ENCODE measurements at regions of chr13 and their contacts with region 1.

Region 1: DNA sequence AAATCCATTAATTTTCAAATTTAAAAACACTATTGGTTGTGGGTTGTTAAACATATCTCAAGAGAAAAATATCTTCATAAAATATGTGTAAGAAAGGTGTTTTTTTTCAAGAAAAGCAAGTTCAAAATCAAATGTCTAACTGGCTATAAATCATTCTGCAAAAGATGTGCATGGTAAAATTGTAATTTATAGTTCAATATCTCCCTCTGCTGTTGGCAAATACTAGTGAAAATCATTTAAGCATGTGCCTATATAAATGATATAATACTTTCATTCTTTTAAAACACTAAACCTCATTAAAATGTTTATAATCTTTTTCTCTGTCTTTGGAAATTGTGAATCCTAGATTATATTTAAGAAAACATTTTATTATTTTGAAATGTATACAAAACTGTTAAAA is 17.2 kb upstream of the SLITRK6 start:
- DNase-seq: no peak
- ATAC-seq: no peak
- H3K4me3 ChIP-seq: no peak overlapping the region
- H3K27ac ChIP-seq: no peak overlapping the region
- H3K4me1 ChIP-seq: no peaks in the 10 kb centered on the region
- H3K27me3 ChIP-seq: no peaks in the 10 kb centered on the region
- CTCF ChIP-seq: peak; percentile 25; the same call in 1 of the 2 replicates
- POLR2A ChIP-seq: no peak
- RAD21 ChIP-seq: no peak

Region 2: GRCh38 chr13:84896128-84896527 is 920.3 kb before region 1 on chr13:
- CTCF ChIA-PET with region 1: no interaction called
- POLR2A ChIA-PET with region 1: no interaction called
- dilution Hi-C with region 1: no loop called
- in situ Hi-C with region 1: no loop called
- intact Hi-C with region 1: loop called (anchors 1 kb)
- DNase-seq: peak; percentile 61
- ATAC-seq: peak; percentile 65
- H3K4me3 ChIP-seq: no peak overlapping the region
- H3K27ac ChIP-seq: no peak overlapping the region
- H3K4me1 ChIP-seq: no peaks in the 10 kb centered on the region
- H3K27me3 ChIP-seq: no peaks in the 10 kb centered on the region
- CTCF ChIP-seq: peak; percentile 75
- POLR2A ChIP-seq: no peak
- RAD21 ChIP-seq: peak; percentile 83